ENCODE measurements at regions of chr7 and their contacts with region 1.

Region 1: DNA sequence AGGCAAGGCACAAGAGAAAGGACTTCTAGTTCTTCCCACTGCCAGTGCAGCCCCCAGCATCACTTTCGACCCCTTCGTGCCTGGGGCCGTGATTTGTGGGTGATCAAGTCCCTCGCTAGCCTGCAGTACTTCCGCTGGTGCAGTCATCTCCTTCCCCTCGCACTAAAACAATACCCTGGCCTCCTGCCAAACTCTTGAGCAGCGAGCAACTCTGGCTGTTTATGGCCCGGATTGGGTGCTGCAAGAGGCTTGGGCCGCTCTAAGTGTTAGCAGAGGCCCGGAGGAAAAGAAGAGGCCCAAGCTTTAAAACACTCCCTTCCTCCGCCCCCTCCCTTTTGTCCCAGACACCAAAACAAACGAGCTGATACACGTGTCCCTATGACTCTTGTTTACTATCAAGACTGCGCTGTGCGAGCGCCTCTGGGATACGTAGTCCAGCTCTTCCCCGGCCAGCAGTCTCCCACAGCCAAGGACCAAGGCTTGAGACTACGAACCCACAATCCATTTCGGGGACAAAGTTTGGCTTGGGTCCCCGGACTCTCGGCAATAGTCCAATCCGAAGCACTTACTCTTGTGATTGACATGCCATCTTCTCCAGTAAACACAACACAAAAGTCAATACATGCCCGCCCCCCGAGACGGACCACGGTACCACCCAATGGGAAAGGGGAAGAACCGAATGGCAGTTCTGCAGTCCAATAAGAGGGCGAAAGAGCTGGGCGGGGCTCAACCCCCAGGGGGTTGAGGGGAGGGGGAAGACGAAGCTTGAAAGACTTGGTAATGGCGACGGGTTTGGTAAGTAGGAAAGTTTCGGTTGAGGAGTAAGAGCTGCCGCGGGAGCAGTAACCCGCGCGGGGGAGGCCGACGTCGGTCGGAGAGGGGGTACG is at the start of gene HBP1:
- DNase-seq: peak; percentile 98
- ATAC-seq: peak; percentile 82
- H3K4me3 Mint-ChIP-seq: peak within 1 kb of the TSS; percentile 91
- H3K27ac Mint-ChIP-seq: peak within 1 kb of the TSS; percentile 100
- H3K4me1 Mint-ChIP-seq: peaks cover 32% of the 10 kb centered on the region
- H3K27me3 Mint-ChIP-seq: no peaks in the 10 kb centered on the region
- total RNA-seq, gene HBP1: 17.8 to 25.4 TPM

Region 2: GRCh38 chr7:106346678-106347217 is 821.7 kb before region 1 on chr7:
- CTCF ChIA-PET with region 1: no interaction called
- POLR2A ChIA-PET with region 1: interaction called, 5 read pairs
- intact Hi-C with region 1: loop called (anchors 2 to 5 kb)
- DNase-seq: peak; percentile 65
- ATAC-seq: peak; percentile 73
- H3K4me3 Mint-ChIP-seq: peak overlapping the region; percentile 66
- H3K27ac Mint-ChIP-seq: peak overlapping the region; percentile 100
- H3K4me1 Mint-ChIP-seq: peaks cover 54% of the 10 kb centered on the region
- H3K27me3 Mint-ChIP-seq: peaks cover 12% of the 10 kb centered on the region

Region 3: DNA sequence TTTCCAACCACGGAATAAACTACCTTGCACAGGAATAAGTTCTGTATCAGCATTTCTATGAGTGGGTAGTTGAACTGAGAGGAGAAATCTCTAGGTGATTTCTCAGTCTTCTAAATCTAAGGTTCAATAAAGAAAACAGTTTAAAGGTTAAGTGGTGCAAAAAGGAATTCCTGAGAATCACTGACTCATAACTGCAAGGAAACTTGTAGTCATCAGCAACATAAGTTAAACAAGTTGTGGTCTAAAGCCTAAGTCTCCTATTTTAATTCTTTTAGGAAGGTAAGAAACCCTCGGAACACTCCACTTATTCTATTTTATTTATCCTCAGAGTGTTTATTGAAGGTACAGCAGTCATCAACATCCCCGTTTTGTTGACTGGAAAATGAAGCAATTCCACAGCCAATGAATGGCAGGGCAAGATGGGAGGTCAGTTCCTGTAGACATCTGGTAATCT is 395.8 kb before region 1 on chr7:
- CTCF ChIA-PET with region 1: no interaction called
- POLR2A ChIA-PET with region 1: interaction called, 3 read pairs
- intact Hi-C with region 1: loop called in 1 of 2 experiments (anchors 1 kb)
- DNase-seq: no peak
- ATAC-seq: peak; percentile 79
- H3K4me3 Mint-ChIP-seq: peak overlapping the region; percentile 27
- H3K27ac Mint-ChIP-seq: peak overlapping the region; percentile 91
- H3K4me1 Mint-ChIP-seq: peaks cover 66% of the 10 kb centered on the region
- H3K27me3 Mint-ChIP-seq: no peaks in the 10 kb centered on the region

Region 4: DNA sequence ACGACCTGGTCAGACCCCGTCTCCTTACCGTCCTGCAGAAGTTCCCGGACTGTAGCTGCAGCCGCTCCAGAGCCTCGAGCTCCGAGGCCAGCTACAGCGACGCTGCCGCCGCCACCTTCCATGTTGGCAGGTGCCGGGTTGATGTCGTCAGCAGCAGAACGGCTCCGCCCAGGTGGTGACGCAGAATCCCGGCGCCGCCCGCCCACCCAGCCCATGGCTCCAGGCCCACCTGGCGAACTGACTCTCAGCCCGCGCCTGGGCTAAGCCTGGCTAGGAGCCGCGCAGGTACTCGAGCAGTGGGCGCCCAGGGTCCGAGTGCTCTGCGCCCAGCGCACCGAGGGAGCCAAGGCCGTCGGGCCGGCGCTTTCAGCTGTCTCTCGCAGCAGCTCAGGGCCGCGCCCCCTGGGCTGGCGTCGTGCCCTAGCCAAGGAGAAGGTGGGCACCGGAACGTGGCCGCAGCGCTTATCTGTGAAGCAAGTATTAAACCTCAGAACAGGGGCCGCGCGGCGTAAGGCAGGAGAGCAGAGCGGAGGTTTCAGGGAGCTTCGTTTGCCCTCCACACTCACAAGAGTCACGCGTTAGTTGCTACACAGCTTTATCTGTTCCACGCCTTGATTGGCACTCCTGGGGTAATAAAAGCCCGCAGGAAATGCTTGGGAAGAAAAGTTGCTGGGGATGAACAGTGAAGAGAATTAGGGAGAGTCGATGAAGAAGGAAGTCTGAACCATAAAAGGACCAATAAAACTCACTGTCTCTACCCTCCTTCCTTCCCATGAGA is 395.5 kb after region 1 on chr7 and contains the starts of genes COG5 and DUS4L:
- CTCF ChIA-PET with region 1: no interaction called
- POLR2A ChIA-PET with region 1: no interaction called
- intact Hi-C with region 1: loop called in 1 of 2 experiments (anchors 1 kb)
- DNase-seq: peak; percentile 92
- ATAC-seq: peak; percentile 88
- H3K4me3 Mint-ChIP-seq: peak within 1 kb of the TSS; percentile 85
- H3K27ac Mint-ChIP-seq: peak within 1 kb of the TSS; percentile 94
- H3K4me1 Mint-ChIP-seq: peaks cover 62% of the 10 kb centered on the region
- H3K27me3 Mint-ChIP-seq: no peaks in the 10 kb centered on the region
- total RNA-seq, gene COG5: 34.1 to 35.5 TPM
- total RNA-seq, gene DUS4L: 12.8 to 13.3 TPM

Region 5: DNA sequence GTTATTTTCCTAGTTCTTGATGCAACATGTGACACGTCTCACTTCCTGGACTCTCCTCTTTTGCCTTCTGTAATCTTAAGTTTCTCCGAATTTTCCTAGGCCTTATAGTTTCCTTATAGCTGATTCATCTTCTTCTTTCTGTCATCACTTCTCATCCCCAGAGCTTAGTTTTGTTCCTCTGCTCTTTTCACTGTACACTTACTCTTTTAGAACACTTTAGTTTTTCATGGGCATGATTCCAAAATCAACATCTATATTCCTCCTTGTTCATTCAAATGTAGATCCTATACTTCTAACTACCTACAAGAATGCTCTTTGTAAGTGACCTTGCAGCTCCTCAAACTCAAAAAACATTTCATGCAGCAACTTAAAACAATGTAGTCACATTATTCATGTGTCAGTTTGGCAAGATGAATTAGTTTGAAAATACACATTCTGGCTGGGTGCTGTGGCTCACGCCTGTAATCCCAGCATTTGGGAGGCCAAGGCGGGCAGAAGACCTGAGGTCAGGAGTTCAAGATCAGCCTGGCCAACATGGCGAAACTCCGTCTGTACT is 647.6 kb after region 1 on chr7:
- CTCF ChIA-PET with region 1: no interaction called
- POLR2A ChIA-PET with region 1: interaction called, 5 read pairs
- intact Hi-C with region 1: loop called in 1 of 2 experiments (anchors 1 kb)
- DNase-seq: no peak
- ATAC-seq: no peak
- H3K4me3 Mint-ChIP-seq: no peak overlapping the region
- H3K27ac Mint-ChIP-seq: peak overlapping the region; percentile 81
- H3K4me1 Mint-ChIP-seq: peaks cover 35% of the 10 kb centered on the region
- H3K27me3 Mint-ChIP-seq: no peaks in the 10 kb centered on the region